CD4-positive, alpha-beta T cell (primary cell): ENCODE measurements at regions of chr5 and their contacts with region 1.

Region 1: GRCh38 chr5:131634996-131635754 is at the start of gene RAPGEF6:
- DNase-seq: peak; percentile 88 to 100 (median 94)
- ATAC-seq: peak; percentile 81
- H3K4me3 ChIP-seq: peak within 1 kb of the TSS; percentile 91
- H3K4me3 Mint-ChIP-seq: peak within 1 kb of the TSS; percentile 96
- H3K27ac ChIP-seq: peak within 1 kb of the TSS; percentile 87 to 98
- H3K27ac Mint-ChIP-seq: peak within 1 kb of the TSS; percentile 98
- H3K4me1 ChIP-seq: peaks cover 33% of the 10 kb centered on the region
- H3K4me1 Mint-ChIP-seq: peaks cover 52% of the 10 kb centered on the region
- H3K27me3 ChIP-seq: no peaks in the 10 kb centered on the region
- H3K27me3 Mint-ChIP-seq: no peaks in the 10 kb centered on the region
- CTCF ChIP-seq: no peak
- total RNA-seq, gene RAPGEF6: 83.3 to 91.4 TPM

Region 2: DNA sequence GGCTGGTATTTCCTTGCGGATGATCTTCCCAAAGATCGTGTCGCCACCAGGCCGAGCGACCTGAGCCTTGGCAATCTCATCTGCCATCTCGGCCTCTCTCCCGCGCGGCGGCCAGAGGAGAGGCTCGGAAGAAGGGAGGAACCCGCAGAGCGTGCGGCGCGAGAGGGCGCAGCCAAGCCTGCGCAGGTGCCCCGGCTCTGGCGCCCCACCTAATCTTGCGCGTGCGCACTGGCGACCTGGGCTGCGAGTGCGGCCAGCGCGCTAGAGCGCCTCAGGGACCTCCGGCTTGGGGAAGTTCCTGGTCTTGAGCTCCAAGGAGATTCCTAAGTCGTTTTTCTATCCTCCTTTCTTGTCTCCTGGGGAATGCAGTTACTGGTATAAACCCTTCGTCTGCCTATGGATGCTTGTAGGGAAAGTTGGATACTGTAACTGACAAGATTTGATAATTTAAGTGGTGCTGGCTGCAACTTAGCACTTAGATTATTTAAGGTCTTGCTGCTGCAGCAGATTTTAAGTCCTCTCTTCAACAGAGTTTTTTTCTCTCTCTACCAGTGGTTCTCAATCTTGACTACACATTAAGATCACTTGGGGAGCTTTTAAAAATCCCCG is 470.0 kb before region 1 on chr5 and contains the start of gene HINT1:
- CTCF ChIA-PET with region 1: no interaction called
- POLR2A ChIA-PET with region 1: interaction called, 3 read pairs
- intact Hi-C with region 1: loop called in 1 of 2 experiments (anchors 5 kb)
- DNase-seq: peak; percentile 81 to 97 (median 92)
- ATAC-seq: peak; percentile 84
- H3K4me3 ChIP-seq: peak within 1 kb of the TSS; percentile 86
- H3K4me3 Mint-ChIP-seq: peak within 1 kb of the TSS; percentile 97
- H3K27ac ChIP-seq: peak within 1 kb of the TSS; percentile 92 to 93
- H3K27ac Mint-ChIP-seq: peak within 1 kb of the TSS; percentile 88
- H3K4me1 ChIP-seq: peaks cover 28% of the 10 kb centered on the region
- H3K4me1 Mint-ChIP-seq: peaks cover 63% of the 10 kb centered on the region
- H3K27me3 ChIP-seq: no peaks in the 10 kb centered on the region
- H3K27me3 Mint-ChIP-seq: no peaks in the 10 kb centered on the region
- CTCF ChIP-seq: peak; percentile 37
- total RNA-seq, gene HINT1: 257 to 263 TPM

Region 3: DNA sequence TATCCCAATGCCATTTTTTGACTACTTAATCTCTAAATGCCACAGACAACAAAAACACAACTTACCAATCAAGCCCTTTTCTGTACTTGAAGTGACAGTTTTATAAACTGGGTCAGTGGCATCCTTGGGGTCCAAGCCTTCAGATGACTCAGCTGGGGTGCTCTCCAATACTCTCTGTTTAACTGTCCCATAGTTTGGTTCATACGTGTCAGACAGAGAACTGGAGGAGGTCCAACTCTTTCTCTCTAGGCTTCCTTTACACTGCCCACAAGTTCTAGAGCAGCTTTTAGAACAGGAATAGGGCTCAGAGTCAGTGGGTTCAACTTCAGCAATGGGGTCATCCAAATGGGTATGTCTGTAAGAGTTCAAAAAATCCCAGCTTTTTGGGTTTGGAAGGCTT is 204.4 kb before region 1 on chr5:
- CTCF ChIA-PET with region 1: no interaction called
- POLR2A ChIA-PET with region 1: no interaction called
- intact Hi-C with region 1: no loop called
- DNase-seq: no peak
- ATAC-seq: no peak
- H3K4me3 ChIP-seq: no peak overlapping the region
- H3K4me3 Mint-ChIP-seq: no peak overlapping the region
- H3K27ac ChIP-seq: no peak overlapping the region
- H3K27ac Mint-ChIP-seq: peak overlapping the region; percentile 69
- H3K4me1 ChIP-seq: no peaks in the 10 kb centered on the region
- H3K4me1 Mint-ChIP-seq: peaks cover 16% of the 10 kb centered on the region
- H3K27me3 ChIP-seq: no peaks in the 10 kb centered on the region
- H3K27me3 Mint-ChIP-seq: no peaks in the 10 kb centered on the region
- CTCF ChIP-seq: no peak

Region 4: DNA sequence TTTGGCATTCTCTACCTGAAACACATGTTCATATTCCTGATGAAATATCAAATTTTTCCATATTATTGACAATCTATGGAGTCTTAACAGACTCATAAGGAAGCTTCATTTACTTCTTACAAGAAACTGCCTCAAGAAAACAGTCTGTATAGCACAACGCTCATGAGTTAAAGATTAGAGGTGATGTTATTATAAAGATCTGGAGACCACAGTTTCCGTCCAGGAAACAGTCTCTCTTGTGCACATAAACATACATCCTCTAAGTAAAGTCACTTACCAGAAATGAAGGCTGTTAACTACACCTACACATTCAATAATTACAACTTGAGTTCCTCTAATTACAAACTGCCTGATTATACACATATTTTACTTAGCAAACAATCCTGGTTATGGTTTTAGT is 87.0 kb before region 1 on chr5:
- CTCF ChIA-PET with region 1: no interaction called
- POLR2A ChIA-PET with region 1: interaction called, 8 read pairs
- intact Hi-C with region 1: loop called in 1 of 2 experiments (anchors 5 kb)
- DNase-seq: peak in 4 of 14 experiments; percentile 32 to 82 (median 76)
- ATAC-seq: peak; percentile 95
- H3K4me3 ChIP-seq: peak overlapping the region; percentile 75
- H3K4me3 Mint-ChIP-seq: peak overlapping the region; percentile 98
- H3K27ac ChIP-seq: peak overlapping the region; percentile 70 to 75
- H3K27ac Mint-ChIP-seq: peak overlapping the region; percentile 94
- H3K4me1 ChIP-seq: peaks cover 24% of the 10 kb centered on the region
- H3K4me1 Mint-ChIP-seq: peaks cover 72% of the 10 kb centered on the region
- H3K27me3 ChIP-seq: no peaks in the 10 kb centered on the region
- H3K27me3 Mint-ChIP-seq: no peaks in the 10 kb centered on the region
- CTCF ChIP-seq: no peak

Region 5: GRCh38 chr5:131589510-131590348 is 45.4 kb before region 1 on chr5:
- CTCF ChIA-PET with region 1: interaction called, 4 read pairs
- POLR2A ChIA-PET with region 1: interaction called, 10 read pairs
- intact Hi-C with region 1: loop called (anchors 2 to 5 kb)
- DNase-seq: peak in 8 of 14 experiments; percentile 11 to 76 (median 33)
- ATAC-seq: peak; percentile 71
- H3K4me3 ChIP-seq: no peak overlapping the region
- H3K4me3 Mint-ChIP-seq: no peak overlapping the region
- H3K27ac ChIP-seq: no peak overlapping the region
- H3K27ac Mint-ChIP-seq: peak overlapping the region; percentile 38
- H3K4me1 ChIP-seq: peaks cover 16% of the 10 kb centered on the region
- H3K4me1 Mint-ChIP-seq: peaks cover 64% of the 10 kb centered on the region
- H3K27me3 ChIP-seq: no peaks in the 10 kb centered on the region
- H3K27me3 Mint-ChIP-seq: no peaks in the 10 kb centered on the region
- CTCF ChIP-seq: peak; percentile 98

Region 6: DNA sequence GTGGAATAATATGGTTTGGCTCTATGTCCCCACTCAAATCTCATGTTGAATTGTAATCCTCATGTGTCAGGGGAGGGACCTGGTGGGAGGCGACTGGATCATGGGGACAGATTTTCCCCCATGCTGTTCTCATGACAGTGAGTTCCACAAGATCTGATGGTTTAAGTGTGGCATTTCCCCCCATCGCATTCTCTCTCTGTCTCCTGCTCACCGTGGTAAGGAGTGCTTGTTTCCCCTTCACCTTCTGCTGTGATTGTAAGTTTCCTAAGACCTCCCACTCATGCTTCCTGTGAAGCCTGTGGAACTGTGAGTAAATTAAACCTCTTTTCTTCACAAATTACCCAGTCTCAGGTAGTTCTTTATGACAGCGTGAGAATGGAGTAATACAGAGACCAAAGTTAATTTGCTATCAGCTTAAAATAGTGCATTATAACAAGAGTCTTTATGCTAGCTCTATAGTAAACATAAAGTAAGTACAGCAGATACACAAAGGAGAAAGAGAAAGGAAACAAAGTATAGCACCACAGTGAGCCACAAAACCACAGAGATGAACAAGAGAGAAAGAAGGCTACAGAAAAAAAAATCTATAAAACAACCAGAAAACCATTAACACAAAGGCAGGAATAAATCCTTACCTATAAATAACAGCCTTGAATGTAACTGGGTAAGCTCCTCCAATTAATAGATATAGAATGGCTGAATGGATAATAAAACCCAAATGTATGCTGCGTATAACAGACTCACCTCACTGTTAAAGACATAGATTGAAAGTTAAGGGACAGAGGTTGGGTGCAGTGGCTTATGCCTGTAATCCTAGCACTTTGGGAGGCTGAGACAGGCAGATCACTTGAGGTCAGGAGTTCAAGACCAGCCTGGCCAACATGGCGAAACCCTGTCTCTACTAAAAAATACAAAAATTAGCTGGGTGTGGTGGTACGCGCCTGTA is 39.8 kb before region 1 on chr5:
- CTCF ChIA-PET with region 1: interaction called, 4 read pairs
- POLR2A ChIA-PET with region 1: interaction called, 5 read pairs
- intact Hi-C with region 1: loop called (anchors 2 to 5 kb)
- DNase-seq: peak in 4 of 14 experiments; percentile 15 to 77 (median 56)
- ATAC-seq: peak; percentile 89
- H3K4me3 ChIP-seq: no peak overlapping the region
- H3K4me3 Mint-ChIP-seq: peak overlapping the region; percentile 45
- H3K27ac ChIP-seq: peak overlapping the region; percentile 45 to 50
- H3K27ac Mint-ChIP-seq: peak overlapping the region; percentile 70
- H3K4me1 ChIP-seq: peaks cover 23% of the 10 kb centered on the region
- H3K4me1 Mint-ChIP-seq: peaks cover 66% of the 10 kb centered on the region
- H3K27me3 ChIP-seq: no peaks in the 10 kb centered on the region
- H3K27me3 Mint-ChIP-seq: no peaks in the 10 kb centered on the region
- CTCF ChIP-seq: no peak

Region 7: GRCh38 chr5:131679913-131680312 is 44.7 kb after region 1 on chr5:
- CTCF ChIA-PET with region 1: no interaction called
- POLR2A ChIA-PET with region 1: interaction called, 5 read pairs
- intact Hi-C with region 1: loop called in 1 of 2 experiments (anchors 5 kb)
- DNase-seq: peak in 2 of 14 experiments; percentile 11 to 16
- ATAC-seq: no peak
- H3K4me3 ChIP-seq: no peak overlapping the region
- H3K4me3 Mint-ChIP-seq: no peak overlapping the region
- H3K27ac ChIP-seq: no peak overlapping the region
- H3K27ac Mint-ChIP-seq: no peak overlapping the region
- H3K4me1 ChIP-seq: no peaks in the 10 kb centered on the region
- H3K4me1 Mint-ChIP-seq: no peaks in the 10 kb centered on the region
- H3K27me3 ChIP-seq: no peaks in the 10 kb centered on the region
- H3K27me3 Mint-ChIP-seq: no peaks in the 10 kb centered on the region
- CTCF ChIP-seq: no peak

Region 8: DNA sequence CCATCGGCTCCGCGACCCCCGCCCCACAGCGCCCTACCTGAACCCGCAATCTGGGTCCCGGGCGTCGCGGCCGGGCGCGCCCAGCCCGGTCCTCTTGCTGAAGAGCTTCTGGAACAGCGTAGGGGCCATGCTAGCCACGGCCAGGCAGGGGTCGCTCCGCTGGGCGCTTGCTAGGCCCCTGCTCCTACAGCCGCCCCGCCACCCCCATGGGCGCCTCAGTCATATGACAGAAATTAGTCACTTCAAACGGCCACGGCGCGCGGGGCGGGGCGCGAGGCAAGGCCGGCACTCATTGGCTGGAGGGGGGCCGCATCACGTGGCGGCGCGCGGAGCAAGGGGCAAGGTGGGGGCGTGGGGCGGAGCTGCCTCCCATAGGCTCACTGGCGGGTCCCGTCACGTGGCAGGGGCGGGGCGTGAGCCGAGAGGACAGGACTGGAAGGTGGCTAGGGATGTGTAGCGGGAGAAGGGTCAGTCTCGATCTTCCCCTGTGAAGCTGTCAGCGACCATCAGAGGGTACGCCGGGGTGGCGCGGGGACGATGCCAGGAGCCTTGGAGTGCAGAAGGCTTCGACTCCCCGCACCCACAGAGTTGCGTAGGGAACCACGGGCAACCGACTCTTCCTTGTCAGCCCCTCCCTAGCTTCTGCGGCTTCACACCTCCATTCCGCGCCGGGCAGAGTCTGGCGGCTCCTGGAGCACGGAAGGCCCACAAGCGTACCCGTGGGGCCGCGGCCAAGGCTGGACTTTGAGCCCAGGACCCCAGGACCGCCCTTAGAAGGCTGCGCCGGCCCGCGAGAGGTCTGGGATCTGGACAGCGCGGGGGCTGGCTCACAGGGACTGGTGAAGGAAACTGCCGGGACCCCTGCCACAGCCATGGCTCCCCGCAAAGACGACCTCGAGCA is 161.9 kb after region 1 on chr5 and contains the start of gene FNIP1:
- CTCF ChIA-PET with region 1: no interaction called
- POLR2A ChIA-PET with region 1: interaction called, 28 read pairs
- intact Hi-C with region 1: loop called (anchors 1 kb)
- DNase-seq: peak; percentile 94 to 99 (median 98)
- ATAC-seq: peak; percentile 94
- H3K4me3 ChIP-seq: peak within 1 kb of the TSS; percentile 93
- H3K4me3 Mint-ChIP-seq: peak within 1 kb of the TSS; percentile 98
- H3K27ac ChIP-seq: peak within 1 kb of the TSS; percentile 88 to 91
- H3K27ac Mint-ChIP-seq: peak within 1 kb of the TSS; percentile 96
- H3K4me1 ChIP-seq: peaks cover 14% of the 10 kb centered on the region
- H3K4me1 Mint-ChIP-seq: peaks cover 44% of the 10 kb centered on the region
- H3K27me3 ChIP-seq: no peaks in the 10 kb centered on the region
- H3K27me3 Mint-ChIP-seq: no peaks in the 10 kb centered on the region
- CTCF ChIP-seq: no peak
- total RNA-seq, gene FNIP1: 34.5 to 34.7 TPM